ENCODE measurements at regions of chr16 and their contacts with region 1.

Region 1: DNA sequence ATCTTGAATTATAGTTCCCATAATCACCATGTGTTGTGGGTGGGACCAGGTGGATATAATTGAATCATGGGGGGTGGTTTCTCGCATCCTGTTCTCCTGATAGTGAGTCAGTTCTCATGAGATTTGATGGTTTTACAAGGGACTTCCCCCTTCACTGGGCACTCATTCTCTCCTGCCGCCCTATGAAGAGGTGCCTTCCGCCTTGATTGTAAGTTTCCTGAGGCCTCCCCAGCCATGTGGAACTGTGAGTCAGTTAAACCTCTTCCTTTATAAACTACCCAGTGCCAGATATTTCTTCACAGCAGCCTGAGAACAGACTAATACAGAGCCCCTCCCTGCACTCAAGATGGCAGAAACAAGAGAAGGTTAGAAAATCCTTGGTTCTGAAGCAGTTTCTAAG is 26.4 kb downstream of the LDAF1 start:
- ATAC-seq: peak in 2 of 8 experiments; percentile 13 to 52
- H3K4me3 ChIP-seq: no peak overlapping the region
- H3K27ac ChIP-seq: no peak overlapping the region
- H3K4me1 ChIP-seq: no peaks in the 10 kb centered on the region

Region 2: GRCh38 chr16:20944861-20945574 is 239.8 kb before region 1 on chr16:
- in situ Hi-C with region 1: no loop called
- ATAC-seq: peak; percentile 44 to 96 (median 78)
- H3K4me3 ChIP-seq: no peak overlapping the region
- H3K27ac ChIP-seq: no peak overlapping the region
- H3K4me1 ChIP-seq: peaks cover 2 to 3% of the 10 kb centered on the region in 2 donors

Region 3: DNA sequence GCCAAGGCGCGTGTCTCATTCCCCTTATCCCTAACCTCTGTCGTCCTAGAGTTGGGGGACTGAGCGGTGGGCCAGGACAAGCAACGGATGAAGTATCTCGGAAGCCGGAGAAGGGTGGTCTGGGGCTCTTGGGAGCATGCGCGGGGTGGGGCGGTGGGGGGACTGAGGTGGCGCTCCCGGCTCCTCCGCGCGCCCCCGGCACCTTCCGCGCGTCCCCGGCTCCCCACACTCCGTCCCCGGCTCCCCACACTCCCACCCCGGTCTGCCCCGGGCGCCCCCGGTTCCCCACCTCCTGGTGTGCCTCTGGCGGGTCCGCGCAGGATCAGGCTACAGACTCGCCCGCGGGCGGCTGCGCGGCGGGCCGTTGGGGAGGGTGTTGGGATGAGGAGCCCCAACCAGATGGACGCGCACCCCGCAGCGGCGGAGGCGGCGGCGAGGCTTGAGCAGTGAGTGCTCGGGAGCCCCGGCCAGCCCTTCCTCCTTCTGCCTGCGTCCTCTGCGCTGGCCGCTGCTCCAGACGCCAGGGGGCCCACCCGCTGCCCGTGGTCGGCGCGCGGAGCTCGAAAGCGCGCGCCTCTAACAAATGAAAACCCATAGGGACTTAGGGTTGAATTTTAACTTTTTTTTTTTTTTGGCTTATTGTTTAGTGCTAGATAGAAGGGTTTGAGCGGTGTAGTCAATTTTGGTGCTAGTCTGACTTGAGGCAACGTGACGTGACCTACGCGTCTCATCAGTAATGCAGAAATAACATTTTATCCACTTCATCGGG is 98.9 kb after region 1 on chr16:
- in situ Hi-C with region 1: loop called in 3 of 9 experiments (anchors 10 to 25 kb)
- ATAC-seq: peak; percentile 84 to 99 (median 98)
- H3K4me3 ChIP-seq: peak overlapping the region; percentile 44 to 54 (median 47)
- H3K27ac ChIP-seq: peak overlapping the region in 1 of 2 donors; percentile 35
- H3K4me1 ChIP-seq: no peaks in the 10 kb centered on the region

Region 4: DNA sequence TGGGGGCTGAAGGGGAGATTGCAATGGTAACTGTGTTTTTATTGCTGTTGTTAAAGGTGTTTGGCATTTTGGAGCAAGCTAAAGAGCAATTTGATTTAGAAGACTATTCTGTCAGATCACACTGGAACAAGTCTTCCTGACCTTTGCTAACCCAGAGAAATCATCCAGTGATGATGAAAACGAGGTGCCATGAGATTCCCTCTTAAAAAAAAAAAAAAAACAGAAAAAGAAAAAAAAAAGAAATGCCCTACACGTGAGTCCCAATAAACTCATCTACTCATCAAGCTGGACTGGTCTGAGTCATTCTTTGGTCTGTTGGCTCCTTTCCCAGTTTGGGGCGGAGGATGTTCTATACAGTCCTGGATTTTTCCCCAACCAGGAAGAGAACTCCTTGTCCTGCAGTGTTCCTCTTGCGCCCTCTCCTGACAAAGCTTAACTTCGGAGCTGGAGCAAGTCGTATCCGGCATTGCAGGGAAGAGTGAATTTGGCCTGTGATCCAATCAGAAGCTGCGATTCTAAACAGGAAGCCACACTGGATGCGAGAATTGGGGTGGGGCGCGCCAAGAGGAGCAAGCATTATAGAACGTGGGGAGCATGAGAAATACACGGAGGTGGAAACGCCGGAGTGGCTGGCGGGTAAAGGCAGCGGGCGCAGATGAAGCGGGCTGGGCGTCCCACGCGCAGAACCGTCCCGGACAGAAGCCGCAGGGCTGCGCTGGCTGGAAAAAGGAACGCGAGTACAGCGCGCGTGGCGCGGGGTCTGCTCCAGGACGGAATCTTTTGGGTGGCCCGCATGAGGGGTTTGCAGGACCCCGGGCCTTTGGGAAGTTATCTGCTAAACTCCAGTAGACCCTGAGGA is 115.7 kb after region 1 on chr16:
- in situ Hi-C with region 1: loop called in 3 of 9 experiments (anchors 10 to 25 kb)
- ATAC-seq: peak; percentile 70 to 97 (median 94)
- H3K4me3 ChIP-seq: peak overlapping the region; percentile 35 to 57 (median 44)
- H3K27ac ChIP-seq: no peak overlapping the region
- H3K4me1 ChIP-seq: no peaks in the 10 kb centered on the region

Region 5: DNA sequence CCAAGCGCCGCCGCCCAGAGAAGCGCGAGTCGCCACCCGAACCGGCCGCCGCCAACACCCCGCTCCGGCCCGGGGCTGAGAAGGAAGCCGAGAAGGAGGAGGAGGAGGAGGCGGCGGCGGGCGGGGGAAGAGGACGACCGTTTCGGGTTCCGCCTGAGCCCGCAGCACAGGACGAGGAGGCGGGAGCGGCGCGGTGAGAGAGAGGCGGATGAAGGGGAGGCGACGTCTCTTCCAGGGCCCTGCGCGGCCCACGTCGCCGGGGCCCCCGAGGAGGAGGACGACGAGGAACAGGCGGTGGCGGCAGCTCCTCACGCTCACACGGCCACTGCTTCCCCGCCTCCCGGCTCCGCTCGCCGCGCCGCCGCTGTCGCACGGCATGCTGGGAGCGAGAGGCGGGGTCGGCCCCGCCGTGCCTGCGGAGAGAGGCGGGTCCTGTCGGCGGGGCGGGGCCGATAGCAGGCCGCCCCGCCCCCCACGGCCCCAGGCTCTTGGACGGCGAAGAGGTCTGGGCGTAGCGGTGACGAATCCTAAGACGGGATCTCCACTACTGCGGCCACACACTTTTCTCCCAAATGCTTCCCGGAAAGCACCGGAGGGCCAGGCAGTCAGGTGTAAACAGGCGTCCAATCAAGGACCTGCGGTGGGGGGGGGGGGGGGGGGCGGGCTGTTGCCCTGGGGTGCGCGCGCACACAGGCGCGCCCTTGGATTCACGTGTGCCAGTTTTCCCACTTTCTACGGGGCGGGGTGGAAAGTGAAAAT is 317.3 kb after region 1 on chr16:
- in situ Hi-C with region 1: no loop called
- ATAC-seq: peak; percentile 81 to 96 (median 94)
- H3K4me3 ChIP-seq: peak overlapping the region; percentile 47 to 100 (median 49)
- H3K27ac ChIP-seq: peak overlapping the region; percentile 64 to 84
- H3K4me1 ChIP-seq: peaks cover 0 to 4% of the 10 kb centered on the region in 2 donors

Region 6: GRCh38 chr16:22321339-22322001 is 1136.6 kb after region 1 on chr16:
- in situ Hi-C with region 1: loop called in 2 of 9 experiments (anchors 10 to 25 kb)
- ATAC-seq: peak; percentile 70 to 87 (median 75)
- H3K4me3 ChIP-seq: no peak overlapping the region
- H3K27ac ChIP-seq: no peak overlapping the region
- H3K4me1 ChIP-seq: peaks cover 0 to 3% of the 10 kb centered on the region in 2 donors